Naive thymus-derived CD4-positive, alpha-beta T cell (primary cell): ENCODE measurements at regions of chr1 and their contacts with region 1.

Region 1: GRCh38 chr1:55215256-55216021 is at the start of gene USP24:
- DNase-seq: peak; percentile 81 to 88 (median 86)
- ATAC-seq: peak; percentile 93
- H3K4me3 ChIP-seq: peak within 1 kb of the TSS; percentile 66
- H3K4me3 Mint-ChIP-seq: peak within 1 kb of the TSS; percentile 75 to 97 (median 95)
- H3K27ac ChIP-seq: peak within 1 kb of the TSS; percentile 93
- H3K27ac Mint-ChIP-seq: peak within 1 kb of the TSS; percentile 93 to 99 (median 98)
- H3K4me1 ChIP-seq: peaks cover 38 to 48% of the 10 kb centered on the region in 2 donors
- H3K4me1 Mint-ChIP-seq: peaks cover 55 to 75% (median 64%) of the 10 kb centered on the region in 7 donors
- H3K27me3 ChIP-seq: no peaks in the 10 kb centered on the region
- H3K27me3 Mint-ChIP-seq: no peaks in the 10 kb centered on the region
- total RNA-seq, gene USP24: 47.3 to 91.4 (median 75.4) TPM

Region 2: DNA sequence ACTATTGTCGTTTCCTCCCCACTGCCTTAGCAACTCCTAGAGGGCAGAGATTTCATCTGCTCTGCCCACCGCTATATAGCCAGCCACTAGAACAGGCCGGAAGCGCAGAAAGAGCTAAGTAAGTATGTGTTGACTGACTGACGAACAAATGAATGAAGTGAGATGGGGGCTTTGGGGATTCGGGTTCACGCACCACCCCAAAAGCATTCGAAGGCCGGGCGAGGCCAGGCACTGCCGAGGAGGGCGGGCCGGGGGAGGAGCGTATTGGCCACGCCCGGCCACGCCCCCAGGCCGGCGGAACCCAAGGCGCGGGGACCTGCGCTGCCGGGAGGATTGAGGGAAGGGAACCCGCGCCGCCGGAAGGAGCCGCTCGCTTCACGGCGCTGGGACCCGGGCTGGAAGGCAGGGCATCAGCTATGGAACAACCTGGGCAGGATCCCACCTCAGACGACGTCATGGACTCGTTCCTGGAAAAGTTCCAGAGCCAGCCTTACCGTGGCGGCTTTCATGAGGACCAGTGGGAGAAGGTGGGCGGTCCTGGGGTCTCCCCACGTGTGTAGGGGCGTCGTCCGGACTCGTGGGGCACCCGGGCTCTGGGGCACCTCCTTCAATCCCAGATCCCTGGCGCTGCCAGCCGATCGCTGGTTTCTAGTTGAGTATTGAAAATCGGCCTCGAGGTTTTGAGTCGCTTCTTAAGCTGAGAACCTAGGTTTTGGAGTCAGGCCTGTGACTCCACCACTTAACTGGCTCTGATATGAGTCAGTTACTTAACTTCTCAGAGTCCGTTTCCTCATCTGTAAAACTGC is 499.7 kb before region 1 on chr1 and contains the start of gene TTC4:
- CTCF ChIA-PET with region 1: no interaction called
- POLR2A ChIA-PET with region 1: no interaction called
- intact Hi-C with region 1: loop called in 1 of 2 experiments (anchors 5 kb)
- DNase-seq: peak; percentile 71 to 92 (median 85)
- ATAC-seq: peak; percentile 99
- H3K4me3 ChIP-seq: peak within 1 kb of the TSS; percentile 86
- H3K4me3 Mint-ChIP-seq: peak within 1 kb of the TSS; percentile 81 to 96 (median 88)
- H3K27ac ChIP-seq: peak within 1 kb of the TSS; percentile 84
- H3K27ac Mint-ChIP-seq: peak within 1 kb of the TSS; percentile 58 to 94 (median 91)
- H3K4me1 ChIP-seq: peaks cover 14 to 15% of the 10 kb centered on the region in 2 donors
- H3K4me1 Mint-ChIP-seq: peaks cover 15 to 42% (median 34%) of the 10 kb centered on the region in 7 donors
- H3K27me3 ChIP-seq: no peaks in the 10 kb centered on the region
- H3K27me3 Mint-ChIP-seq: no peaks in the 10 kb centered on the region
- total RNA-seq, gene TTC4: 11.6 to 25.8 (median 21.4) TPM

Region 3: GRCh38 chr1:55150880-55151588 is 64.4 kb before region 1 on chr1:
- CTCF ChIA-PET with region 1: interaction called, 5 read pairs
- POLR2A ChIA-PET with region 1: interaction called, 4 read pairs
- intact Hi-C with region 1: loop called in 1 of 2 experiments (anchors 2 kb)
- DNase-seq: peak in 6 of 9 donors; percentile 17 to 52 (median 38)
- ATAC-seq: peak; percentile 88
- H3K4me3 ChIP-seq: peak overlapping the region; percentile 36
- H3K4me3 Mint-ChIP-seq: peak overlapping the region; percentile 51 to 87 (median 70)
- H3K27ac ChIP-seq: peak overlapping the region; percentile 60
- H3K27ac Mint-ChIP-seq: peak overlapping the region; percentile 82 to 96 (median 92)
- H3K4me1 ChIP-seq: peaks cover 16 to 23% of the 10 kb centered on the region in 2 donors
- H3K4me1 Mint-ChIP-seq: peaks cover 11 to 49% (median 37%) of the 10 kb centered on the region in 7 donors
- H3K27me3 ChIP-seq: no peaks in the 10 kb centered on the region
- H3K27me3 Mint-ChIP-seq: no peaks in the 10 kb centered on the region

Region 4: DNA sequence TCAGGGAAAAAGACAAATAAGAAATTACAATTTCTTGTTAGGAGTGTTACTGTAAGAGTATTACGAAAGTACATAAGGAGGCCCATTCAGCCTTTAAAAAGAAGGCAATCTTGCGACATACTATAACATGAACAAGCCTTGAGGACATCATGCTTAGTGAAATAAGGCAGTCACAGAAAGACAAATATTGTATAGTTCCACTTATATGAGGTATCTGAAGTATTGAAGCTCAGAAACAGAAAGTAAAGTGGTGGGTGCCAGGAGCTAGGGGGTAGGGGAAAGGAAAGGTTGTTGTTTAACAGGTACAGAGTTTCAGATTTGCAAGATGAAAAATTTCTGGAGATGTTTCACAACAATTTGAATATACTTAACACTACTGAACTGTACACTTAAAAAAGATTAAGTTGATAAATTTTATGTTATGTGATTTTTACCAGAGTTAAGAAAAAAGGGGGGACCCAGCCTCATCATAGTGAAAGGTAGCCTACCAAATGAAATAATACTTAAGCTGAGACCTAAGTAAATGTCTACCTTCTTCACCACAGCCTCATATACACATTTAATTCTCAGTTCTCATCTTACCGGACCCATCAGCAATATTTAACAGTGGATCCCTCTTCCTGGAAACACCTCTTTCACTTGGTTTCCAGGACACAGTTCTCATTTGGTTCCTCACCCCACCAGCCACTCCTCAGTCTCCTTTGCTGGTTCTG is 19.8 kb before region 1 on chr1:
- CTCF ChIA-PET with region 1: no interaction called
- POLR2A ChIA-PET with region 1: interaction called, 11 read pairs
- intact Hi-C with region 1: loop called (anchors 2 kb)
- DNase-seq: no peak
- ATAC-seq: peak; percentile 26
- H3K4me3 ChIP-seq: no peak overlapping the region
- H3K4me3 Mint-ChIP-seq: peak overlapping the region in 6 of 10 donors; percentile 3 to 35 (median 8)
- H3K27ac ChIP-seq: peak overlapping the region; percentile 9
- H3K27ac Mint-ChIP-seq: peak overlapping the region in 7 of 9 donors; percentile 18 to 81 (median 57)
- H3K4me1 ChIP-seq: peaks cover 9 to 35% of the 10 kb centered on the region in 2 donors
- H3K4me1 Mint-ChIP-seq: peaks cover 44 to 92% (median 88%) of the 10 kb centered on the region in 7 donors
- H3K27me3 ChIP-seq: no peaks in the 10 kb centered on the region
- H3K27me3 Mint-ChIP-seq: no peaks in the 10 kb centered on the region

Region 5: GRCh38 chr1:55230659-55231058 is 15.2 kb after region 1 on chr1:
- CTCF ChIA-PET with region 1: no interaction called
- POLR2A ChIA-PET with region 1: interaction called, 4 read pairs
- intact Hi-C with region 1: loop called in 1 of 2 experiments (anchors 2 kb)
- DNase-seq: no peak
- ATAC-seq: no peak
- H3K4me3 ChIP-seq: no peak overlapping the region
- H3K4me3 Mint-ChIP-seq: no peak overlapping the region
- H3K27ac ChIP-seq: no peak overlapping the region
- H3K27ac Mint-ChIP-seq: no peak overlapping the region
- H3K4me1 ChIP-seq: no peaks in the 10 kb centered on the region
- H3K4me1 Mint-ChIP-seq: peaks cover 0 to 6% (median 2%) of the 10 kb centered on the region in 7 donors
- H3K27me3 ChIP-seq: no peaks in the 10 kb centered on the region
- H3K27me3 Mint-ChIP-seq: peaks cover 0 to 27% (median 6%) of the 10 kb centered on the region in 5 donors

Region 6: DNA sequence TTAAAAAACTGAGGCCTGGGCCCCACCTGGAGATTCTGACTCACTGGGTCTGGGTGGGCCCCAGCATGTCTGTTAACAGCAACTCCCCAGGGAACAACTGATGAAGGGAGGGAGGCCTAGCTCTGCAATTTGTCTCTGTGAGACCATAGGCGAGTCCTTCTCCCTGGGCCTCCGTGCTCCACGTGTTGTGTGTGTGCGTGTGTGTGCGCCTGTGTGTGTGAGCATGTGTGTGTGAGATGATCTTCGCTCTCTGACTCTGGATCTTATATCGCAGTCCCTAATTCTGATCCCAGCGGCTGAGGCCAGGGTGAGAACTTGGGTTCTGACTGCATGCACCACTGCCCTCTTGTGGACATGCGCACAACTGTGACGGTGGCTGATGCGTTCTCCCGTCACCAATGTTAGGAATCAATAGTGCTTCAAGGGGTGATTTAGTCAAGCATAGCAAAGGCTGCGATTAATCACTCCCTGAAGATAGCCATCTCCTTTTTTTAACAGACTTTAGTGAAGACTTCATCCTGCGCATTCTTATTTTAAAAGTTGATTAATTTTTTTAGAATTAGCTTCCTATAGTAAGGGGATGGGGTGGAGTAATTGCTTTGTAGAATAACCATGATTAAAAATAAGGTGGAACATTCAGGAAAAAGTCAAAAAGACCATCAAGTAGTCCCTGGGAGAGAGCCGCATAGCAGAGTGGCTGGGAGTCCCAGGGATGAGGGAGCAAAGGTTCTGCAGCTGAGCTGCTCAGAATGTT is 62.1 kb after region 1 on chr1:
- CTCF ChIA-PET with region 1: interaction called, 3 read pairs
- POLR2A ChIA-PET with region 1: interaction called, 3 read pairs
- intact Hi-C with region 1: loop called (anchors 1 kb)
- DNase-seq: peak; percentile 50 to 74 (median 70)
- ATAC-seq: peak; percentile 96
- H3K4me3 ChIP-seq: no peak overlapping the region
- H3K4me3 Mint-ChIP-seq: peak overlapping the region in 2 of 10 donors; percentile 27 to 59
- H3K27ac ChIP-seq: no peak overlapping the region
- H3K27ac Mint-ChIP-seq: peak overlapping the region in 5 of 9 donors; percentile 21 to 81 (median 55)
- H3K4me1 ChIP-seq: peaks cover 0 to 4% of the 10 kb centered on the region in 2 donors
- H3K4me1 Mint-ChIP-seq: peaks cover 4 to 20% (median 8%) of the 10 kb centered on the region in 7 donors
- H3K27me3 ChIP-seq: no peaks in the 10 kb centered on the region
- H3K27me3 Mint-ChIP-seq: peaks cover 0 to 11% (median 0%) of the 10 kb centered on the region in 5 donors